Activated naive CD4-positive, alpha-beta T cell treated with anti-CD3 and anti-CD28 coated beads for 36 hours (primary cell): ENCODE measurements at regions of chr17 and their contacts with region 1.

Region 1: GRCh38 chr17:60142872-60143499 is 6.8 kb upstream of the CA4 start:
- DNase-seq: peak; percentile 93
- H3K4me3 Mint-ChIP-seq: peak overlapping the region; percentile 22
- H3K27ac Mint-ChIP-seq: no peak overlapping the region
- H3K4me1 Mint-ChIP-seq: peaks cover 20% of the 10 kb centered on the region
- H3K27me3 Mint-ChIP-seq: peaks cover 91% of the 10 kb centered on the region

Region 2: GRCh38 chr17:60169921-60170742 is 27.1 kb after region 1 on chr17:
- CTCF ChIA-PET with region 1: interaction called, 8 read pairs
- intact Hi-C with region 1: loop called (anchors 1 kb)
- DNase-seq: peak; percentile 63
- H3K4me3 Mint-ChIP-seq: peak overlapping the region; percentile 40
- H3K27ac Mint-ChIP-seq: peak overlapping the region; percentile 80
- H3K4me1 Mint-ChIP-seq: peaks cover 34% of the 10 kb centered on the region
- H3K27me3 Mint-ChIP-seq: peaks cover 3% of the 10 kb centered on the region

Region 3: GRCh38 chr17:60231234-60231633 is 88.2 kb after region 1 on chr17:
- CTCF ChIA-PET with region 1: interaction called, 4 read pairs
- intact Hi-C with region 1: loop called (anchors 1 kb)
- DNase-seq: no peak
- H3K4me3 Mint-ChIP-seq: no peak overlapping the region
- H3K27ac Mint-ChIP-seq: no peak overlapping the region
- H3K4me1 Mint-ChIP-seq: peaks cover 6% of the 10 kb centered on the region
- H3K27me3 Mint-ChIP-seq: no peaks in the 10 kb centered on the region

Region 4: DNA sequence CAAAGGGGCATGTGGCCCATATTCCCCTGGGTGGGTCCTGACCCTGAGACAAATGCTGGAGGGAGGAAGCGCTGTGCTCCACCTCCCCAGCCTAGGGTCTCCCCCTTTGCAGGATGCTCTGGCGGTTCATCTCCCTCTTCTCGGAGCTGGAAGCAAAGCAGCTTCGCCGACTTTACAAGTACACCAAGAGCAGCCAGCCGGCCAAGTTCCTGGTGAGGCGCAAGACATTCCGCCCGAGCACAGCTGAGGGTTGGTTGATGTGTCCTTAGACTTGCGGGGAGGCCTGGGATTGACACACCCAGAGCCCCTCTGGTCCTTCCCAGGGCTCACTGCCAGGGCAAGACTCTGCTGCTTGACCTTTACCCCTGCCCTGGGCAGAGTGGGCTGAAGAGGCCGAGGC is 283.6 kb after region 1 on chr17:
- CTCF ChIA-PET with region 1: no interaction called
- intact Hi-C with region 1: no loop called
- DNase-seq: no peak
- H3K4me3 Mint-ChIP-seq: no peak overlapping the region
- H3K27ac Mint-ChIP-seq: no peak overlapping the region
- H3K4me1 Mint-ChIP-seq: peaks cover 4% of the 10 kb centered on the region
- H3K27me3 Mint-ChIP-seq: no peaks in the 10 kb centered on the region